ENCODE measurements at regions of chr7 and their contacts with region 1.

Region 1: GRCh38 chr7:104973909-104974415 is 40.0 kb upstream of the KMT2E start:
- DNase-seq: no peak
- ATAC-seq: peak; percentile 46
- H3K4me3 ChIP-seq: no peak overlapping the region
- H3K4me1 ChIP-seq: peaks cover 76% of the 10 kb centered on the region
- CTCF ChIP-seq: no peak

Region 2: GRCh38 chr7:104931181-104931781 is 42.7 kb before region 1 on chr7:
- intact Hi-C with region 1: loop called in 1 of 2 experiments (anchors 5 kb)
- DNase-seq: peak in 2 of 3 donors; percentile 61 to 74
- ATAC-seq: peak; percentile 30
- H3K4me3 ChIP-seq: no peak overlapping the region
- H3K4me1 ChIP-seq: peaks cover 43% of the 10 kb centered on the region
- CTCF ChIP-seq: no peak

Region 3: DNA sequence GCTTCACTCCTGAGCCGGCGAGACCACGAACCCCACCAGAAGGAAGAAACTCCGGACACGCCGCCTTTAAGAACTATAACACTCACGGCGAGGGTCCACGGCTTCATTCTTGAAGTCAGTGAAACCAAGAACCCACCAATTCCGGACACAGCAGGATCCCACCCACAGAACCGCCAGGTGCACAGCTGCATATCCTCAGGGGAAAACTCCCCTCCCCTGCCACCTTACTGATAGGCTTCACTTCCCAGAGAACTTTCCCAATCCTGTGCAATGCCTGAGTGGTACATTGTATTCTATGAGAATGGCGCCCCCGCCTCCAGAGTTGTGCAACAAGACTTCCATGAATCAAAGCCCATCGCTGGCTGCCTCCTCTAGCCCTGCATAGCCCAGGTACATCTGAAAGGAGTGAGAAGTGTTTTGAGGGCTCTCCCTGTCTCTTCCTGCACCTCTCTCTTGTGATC is 32.7 kb before region 1 on chr7:
- intact Hi-C with region 1: no loop called
- DNase-seq: peak in 1 of 3 donors; percentile 53
- ATAC-seq: no peak
- H3K4me3 ChIP-seq: no peak overlapping the region
- H3K4me1 ChIP-seq: peaks cover 56% of the 10 kb centered on the region
- CTCF ChIP-seq: no peak

Measured in mucosa of descending colon (tissue), 3 donors.